A549 (cell line): ENCODE measurements at regions of chr15 and their contacts with region 1.

Region 1: DNA sequence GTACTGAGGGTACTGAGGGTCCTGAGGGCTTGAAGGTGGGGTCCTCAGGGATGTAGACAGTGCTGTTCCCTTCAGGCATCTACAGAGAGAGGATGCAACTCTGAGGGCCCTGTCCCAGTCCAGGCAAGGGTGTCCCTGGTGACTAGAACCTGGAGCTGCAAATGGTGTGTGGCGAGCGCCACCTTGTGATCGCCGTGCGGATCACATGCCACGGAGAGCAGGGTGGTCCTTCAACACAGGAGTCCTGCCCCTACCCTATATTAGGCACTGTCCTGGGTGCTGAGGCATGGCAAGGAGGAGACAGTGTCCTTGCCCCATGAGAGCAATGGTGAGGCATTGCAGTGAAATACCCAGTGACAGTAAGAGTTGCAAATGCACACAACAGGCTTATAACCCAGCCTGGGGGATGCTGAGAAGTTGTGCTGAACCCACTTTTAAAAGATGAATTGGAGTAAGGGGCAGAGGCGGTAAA is 23.6 kb downstream of the RHCG start:
- DNase-seq: peak; percentile 78 to 88
- ATAC-seq: peak; percentile 74 to 95
- H3K4me3 ChIP-seq: no peak overlapping the region
- H3K27ac ChIP-seq: no peak overlapping the region
- H3K4me1 ChIP-seq: peaks cover 4% of the 10 kb centered on the region; the same call in 1 of the 3 replicates
- CTCF ChIP-seq: peak; percentile 94
- EP300 ChIP-seq: no peak
- POLR2A ChIP-seq: no peak
- RAD21 ChIP-seq: peak; percentile 92 to 96

Region 2: GRCh38 chr15:89346516-89347231 is 126.1 kb before region 1 on chr15:
- CTCF ChIA-PET with region 1: interaction called, 242 read pairs
- POLR2A ChIA-PET with region 1: no interaction called
- DNase-seq: no peak
- ATAC-seq: peak; percentile 40 to 65; a peak in 3 of 6 replicates
- H3K4me3 ChIP-seq: no peak overlapping the region
- H3K27ac ChIP-seq: no peak overlapping the region
- H3K4me1 ChIP-seq: no peaks in the 10 kb centered on the region
- CTCF ChIP-seq: no peak
- EP300 ChIP-seq: no peak
- POLR2A ChIP-seq: no peak
- RAD21 ChIP-seq: no peak

Region 3: DNA sequence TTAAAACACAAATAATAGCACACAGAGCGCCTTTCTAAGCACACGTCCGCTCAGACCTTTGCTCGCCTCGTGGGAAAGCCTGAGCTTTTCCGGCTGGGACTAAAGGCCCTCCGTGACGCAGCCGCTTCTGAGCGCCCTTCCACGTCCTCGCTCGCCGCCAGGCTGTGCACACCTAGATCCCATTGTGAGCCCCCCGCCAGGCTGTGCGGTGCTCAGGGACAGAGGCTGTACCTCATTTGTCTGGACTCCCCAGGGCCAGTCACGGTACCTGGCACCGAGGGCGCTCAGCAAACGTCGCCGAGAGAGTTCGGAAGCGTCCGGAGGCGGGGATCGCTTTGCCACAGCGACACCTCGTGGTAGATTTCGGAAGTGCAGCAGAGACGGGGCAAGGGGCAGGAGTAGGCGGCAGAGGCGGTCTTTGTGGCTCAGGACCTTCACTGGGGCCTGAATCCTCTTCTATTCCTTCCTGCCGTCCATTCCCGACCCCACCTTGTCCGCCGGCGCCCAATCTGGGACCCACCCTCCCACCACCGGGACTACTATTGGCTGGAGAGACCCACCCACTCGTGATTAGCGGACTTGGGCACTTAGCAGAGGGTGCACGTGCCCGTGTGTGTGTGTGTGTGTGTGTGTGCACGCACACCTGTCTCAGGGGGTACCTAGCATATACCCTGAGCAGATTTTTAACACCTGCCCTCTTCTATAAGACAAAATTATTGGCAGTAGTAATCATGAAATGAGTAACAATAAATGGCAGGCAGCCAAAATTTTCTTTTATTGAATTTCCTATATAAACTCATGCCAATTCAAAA is 42.1 kb before region 1 on chr15:
- CTCF ChIA-PET with region 1: interaction called, 32 read pairs
- POLR2A ChIA-PET with region 1: no interaction called
- DNase-seq: peak; percentile 80 to 96
- ATAC-seq: peak; percentile 80 to 96
- H3K4me3 ChIP-seq: peak overlapping the region; percentile 41
- H3K27ac ChIP-seq: peak overlapping the region; percentile 69 to 81
- H3K4me1 ChIP-seq: peaks cover 27% of the 10 kb centered on the region; the same call in 2 of the 3 replicates
- CTCF ChIP-seq: peak; percentile 96
- EP300 ChIP-seq: no peak
- POLR2A ChIP-seq: 0 out of 2 replicates have a peak, but pooled peaks have one; percentile 8
- RAD21 ChIP-seq: peak; percentile 83 to 85

Region 4: GRCh38 chr15:89448825-89449224 is 24.0 kb before region 1 on chr15:
- CTCF ChIA-PET with region 1: interaction called, 158 read pairs
- POLR2A ChIA-PET with region 1: no interaction called
- DNase-seq: no peak
- ATAC-seq: peak in 1 of 2 experiments; percentile 9; a peak in 1 of 6 replicates
- H3K4me3 ChIP-seq: no peak overlapping the region
- H3K27ac ChIP-seq: no peak overlapping the region
- H3K4me1 ChIP-seq: peaks cover 18% of the 10 kb centered on the region; the same call in 2 of the 3 replicates
- CTCF ChIP-seq: no peak
- EP300 ChIP-seq: no peak
- POLR2A ChIP-seq: no peak
- RAD21 ChIP-seq: no peak

Region 5: DNA sequence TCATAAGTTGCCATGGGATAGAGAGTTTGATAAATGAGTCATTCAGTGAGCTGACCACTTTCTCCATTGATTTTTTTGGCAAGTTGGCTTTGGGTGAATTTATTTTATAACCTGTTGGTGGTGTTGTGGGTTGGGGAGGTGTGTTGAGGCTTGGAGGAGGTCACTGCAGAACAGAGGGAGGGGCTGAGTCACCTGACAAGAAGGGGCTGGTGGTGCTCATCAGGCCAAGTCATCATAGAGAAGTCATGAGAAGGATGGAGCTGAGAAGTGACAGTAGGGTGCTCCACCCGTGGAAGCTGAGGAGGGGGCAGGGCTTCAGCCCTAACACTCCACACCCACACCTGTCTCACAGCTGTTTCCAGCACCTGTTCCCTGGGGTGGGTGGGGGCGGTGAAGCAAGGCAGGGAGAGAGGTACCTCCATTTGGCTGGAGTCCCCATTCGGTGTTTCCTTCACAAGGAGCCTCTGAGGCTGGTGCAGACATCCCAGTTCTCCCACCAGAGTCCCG is 13.1 kb after region 1 on chr15:
- CTCF ChIA-PET with region 1: interaction called, 132 read pairs
- POLR2A ChIA-PET with region 1: no interaction called
- DNase-seq: no peak
- ATAC-seq: no peak
- H3K4me3 ChIP-seq: no peak overlapping the region
- H3K27ac ChIP-seq: no peak overlapping the region
- H3K4me1 ChIP-seq: peaks cover 7% of the 10 kb centered on the region; the same call in 1 of the 3 replicates
- CTCF ChIP-seq: no peak
- EP300 ChIP-seq: no peak
- POLR2A ChIP-seq: no peak
- RAD21 ChIP-seq: no peak

Region 6: GRCh38 chr15:89556413-89557262 is 83.8 kb after region 1 on chr15:
- CTCF ChIA-PET with region 1: interaction called, 14 read pairs
- POLR2A ChIA-PET with region 1: no interaction called
- DNase-seq: peak; percentile 72 to 89
- ATAC-seq: peak; percentile 79 to 93
- H3K4me3 ChIP-seq: no peak overlapping the region
- H3K27ac ChIP-seq: peak overlapping the region in 1 of 2 experiments; percentile 48; a peak in 1 of 6 replicates
- H3K4me1 ChIP-seq: peaks cover 3% of the 10 kb centered on the region; the same call in 2 of the 3 replicates
- CTCF ChIP-seq: peak; percentile 89
- EP300 ChIP-seq: no peak
- POLR2A ChIP-seq: no peak
- RAD21 ChIP-seq: peak; percentile 86 to 87